Ascending aorta (tissue), 2 donors: ENCODE measurements at regions of chr11 and their contacts with region 1.

Region 1: GRCh38 chr11:58579192-58580129 is 598 bp downstream of the ZFP91 start:
- DNase-seq: peak; percentile 77 to 96
- H3K4me3 ChIP-seq: peak overlapping the region; percentile 94 to 97
- H3K27ac ChIP-seq: peak overlapping the region; percentile 98 to 99
- H3K4me1 ChIP-seq: peaks cover 0 to 32% of the 10 kb centered on the region in 2 donors
- H3K27me3 ChIP-seq: no peaks in the 10 kb centered on the region
- CTCF ChIP-seq: peak; percentile 65 to 94 (median 73)

Region 2: DNA sequence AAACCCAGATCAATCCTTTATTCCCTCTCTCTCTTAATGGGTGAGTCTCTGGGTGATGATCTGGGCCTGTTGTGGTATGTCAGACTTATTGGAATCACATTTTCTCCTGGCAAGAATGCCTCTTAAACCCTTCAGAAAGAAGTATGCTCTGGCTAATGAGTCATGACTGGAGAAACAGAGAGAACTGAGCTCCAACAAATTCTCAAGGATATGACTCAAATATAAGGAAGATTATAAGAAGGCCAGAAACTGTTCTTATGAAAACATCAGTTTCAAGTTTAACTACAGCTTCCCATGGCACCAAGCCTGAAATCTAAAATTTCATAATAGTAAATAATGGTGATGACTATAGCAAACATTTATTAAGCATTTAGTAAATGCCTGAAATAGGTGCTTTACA is 1506.8 kb before region 1 on chr11:
- intact Hi-C with region 1: loop called (anchors 10 kb)
- DNase-seq: no peak
- H3K4me3 ChIP-seq: no peak overlapping the region
- H3K27ac ChIP-seq: peak overlapping the region; percentile 30 to 60
- H3K4me1 ChIP-seq: peaks cover 0 to 4% of the 10 kb centered on the region in 2 donors
- H3K27me3 ChIP-seq: no peaks in the 10 kb centered on the region
- CTCF ChIP-seq: no peak

Region 3: DNA sequence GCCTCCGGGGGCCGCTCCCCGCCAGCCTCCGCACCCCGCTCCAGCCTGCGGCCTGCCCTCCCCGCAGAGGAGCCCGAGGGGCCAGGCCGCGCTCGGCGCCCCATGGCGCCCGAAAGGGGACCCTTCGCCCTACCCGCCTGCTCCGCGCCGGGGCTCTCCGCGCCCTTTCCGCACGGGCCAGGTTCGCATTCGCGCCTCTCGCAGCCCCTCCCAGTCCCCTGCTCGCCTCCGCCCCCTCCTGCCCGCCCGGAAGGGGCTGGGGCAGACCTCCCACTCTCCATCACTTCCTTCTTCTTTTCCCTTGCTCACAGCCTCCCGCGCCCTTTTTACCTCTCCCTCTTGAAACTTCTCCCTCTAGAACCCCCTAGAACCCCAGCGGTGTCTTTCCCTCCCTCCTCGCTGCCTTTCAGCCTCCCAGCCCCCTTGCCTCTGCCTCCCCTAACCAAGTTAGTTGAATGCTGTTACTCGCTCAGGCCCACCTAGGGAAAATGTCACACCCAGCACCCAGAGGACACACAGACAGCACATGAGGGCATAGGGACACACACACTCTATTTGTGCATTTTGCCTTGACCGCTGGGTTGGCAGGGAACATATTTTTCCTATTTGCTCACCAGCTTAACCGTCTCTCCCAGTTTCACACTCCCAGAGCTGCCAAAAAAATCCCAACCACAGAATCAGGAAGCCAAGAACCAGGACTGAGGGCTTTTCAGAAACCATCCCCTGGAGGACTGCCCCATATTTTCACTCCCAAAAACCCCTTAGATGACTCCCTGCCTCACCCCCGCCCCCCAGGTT is 1152.3 kb before region 1 on chr11 and contains the start of gene SLC43A3:
- intact Hi-C with region 1: loop called (anchors 2 kb)
- DNase-seq: peak; percentile 43 to 89
- H3K4me3 ChIP-seq: peak within 1 kb of the TSS; percentile 49 to 80
- H3K27ac ChIP-seq: peak within 1 kb of the TSS; percentile 97 to 98
- H3K4me1 ChIP-seq: peaks cover 23 to 43% of the 10 kb centered on the region in 2 donors
- H3K27me3 ChIP-seq: no peaks in the 10 kb centered on the region
- CTCF ChIP-seq: no peak
- total RNA-seq, gene SLC43A3: 211 TPM

Region 4: DNA sequence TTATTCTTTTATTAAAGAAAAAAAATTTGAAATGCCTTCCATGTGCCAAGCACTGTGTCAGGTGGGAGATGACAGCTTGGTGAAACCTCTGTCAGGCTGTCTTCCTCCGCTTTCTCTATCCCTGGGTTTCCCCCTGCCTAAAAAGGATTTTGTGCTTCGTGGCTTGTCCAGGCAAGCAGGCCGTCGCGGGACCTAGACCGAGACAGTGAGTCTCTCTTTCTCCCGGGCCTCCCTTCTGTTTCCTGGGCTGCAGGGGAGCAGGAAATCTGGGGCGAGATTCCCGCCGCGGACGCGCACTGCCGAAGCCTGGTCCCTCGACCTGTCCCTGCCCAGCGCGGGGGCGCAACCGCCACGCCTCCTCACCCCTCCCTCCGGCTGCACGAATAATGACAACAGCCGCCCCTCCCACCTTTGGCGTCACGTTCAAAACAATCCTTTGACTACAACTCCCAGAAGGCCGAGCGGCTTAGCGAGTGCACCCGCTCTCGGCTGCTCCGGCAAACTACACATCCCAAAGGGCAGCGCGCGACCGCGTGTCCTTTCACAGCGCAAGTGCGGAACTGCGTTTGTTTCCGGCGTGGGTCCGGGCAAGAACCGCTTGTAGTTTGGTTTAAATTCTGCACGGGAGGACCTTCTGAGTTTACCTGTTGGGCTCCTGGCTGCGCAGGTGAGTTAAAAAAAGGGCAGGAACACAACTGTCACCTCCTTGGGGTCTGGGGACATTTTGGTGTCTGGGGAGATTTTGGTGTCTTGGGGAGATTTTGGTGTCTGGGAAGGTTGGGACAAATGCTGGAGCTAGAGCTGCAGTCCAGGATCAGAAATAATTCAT is 922.1 kb before region 1 on chr11 and contains the start of gene CLP1:
- intact Hi-C with region 1: loop called (anchors 2 kb)
- DNase-seq: peak; percentile 98 to 100
- H3K4me3 ChIP-seq: peak within 1 kb of the TSS; percentile 67 to 70
- H3K27ac ChIP-seq: peak within 1 kb of the TSS; percentile 87 to 88
- H3K4me1 ChIP-seq: peaks cover 0 to 6% of the 10 kb centered on the region in 2 donors
- H3K27me3 ChIP-seq: no peaks in the 10 kb centered on the region
- CTCF ChIP-seq: no peak
- total RNA-seq, gene CLP1: 1.2 TPM

Region 5: DNA sequence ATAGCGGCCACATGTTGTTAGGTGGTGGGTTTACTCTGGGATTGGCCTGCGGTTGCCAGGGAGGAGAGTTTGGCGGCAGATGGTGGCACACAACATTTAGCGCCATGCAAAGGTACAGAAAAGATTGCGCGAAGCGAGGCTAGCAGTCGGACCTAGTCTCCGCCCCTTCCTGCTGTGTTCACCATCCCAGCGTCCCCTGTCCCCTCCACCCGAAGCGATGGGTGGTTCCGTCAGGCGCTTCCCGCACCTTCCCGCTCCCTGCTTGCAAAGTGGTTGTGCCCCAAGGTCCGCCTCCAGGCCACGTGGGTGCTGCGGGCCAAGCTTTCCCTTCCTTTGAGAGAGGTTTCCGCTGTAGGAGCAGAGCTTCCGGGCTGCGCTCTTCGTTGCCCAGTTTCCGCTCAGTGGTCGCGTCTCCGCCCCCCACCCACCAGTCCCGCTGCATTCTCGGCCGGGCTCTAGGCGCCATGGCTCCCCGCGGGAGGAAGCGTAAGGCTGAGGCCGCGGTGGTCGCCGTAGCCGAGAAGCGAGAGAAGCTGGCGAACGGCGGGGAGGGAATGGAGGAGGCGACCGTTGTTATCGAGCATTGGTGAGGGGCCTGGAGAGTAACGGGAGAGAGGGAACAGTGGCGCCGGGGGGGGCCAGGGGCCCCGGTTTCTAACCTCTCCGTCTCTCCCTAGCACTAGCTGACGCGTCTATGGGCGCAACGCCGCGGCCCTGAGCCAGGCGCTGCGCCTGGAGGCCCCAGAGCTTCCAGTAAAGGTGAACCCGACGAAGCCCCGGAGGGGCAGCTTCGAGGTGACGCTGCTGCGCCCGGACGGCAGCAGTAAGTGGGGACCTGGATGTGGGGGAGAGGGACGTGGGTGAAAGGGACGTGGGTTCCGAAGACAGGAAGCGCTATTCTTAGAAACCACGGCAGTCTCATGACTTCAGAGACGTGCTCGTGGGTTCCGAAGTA is 838.1 kb before region 1 on chr11 and contains the start of gene SELENOH:
- intact Hi-C with region 1: loop called (anchors 5 kb)
- DNase-seq: peak; percentile 84 to 98
- H3K4me3 ChIP-seq: peak within 1 kb of the TSS; percentile 91 to 93
- H3K27ac ChIP-seq: peak within 1 kb of the TSS; percentile 95 to 97
- H3K4me1 ChIP-seq: peaks cover 0 to 15% of the 10 kb centered on the region in 2 donors
- H3K27me3 ChIP-seq: no peaks in the 10 kb centered on the region
- CTCF ChIP-seq: no peak
- total RNA-seq, gene SELENOH: 113 TPM

Region 6: DNA sequence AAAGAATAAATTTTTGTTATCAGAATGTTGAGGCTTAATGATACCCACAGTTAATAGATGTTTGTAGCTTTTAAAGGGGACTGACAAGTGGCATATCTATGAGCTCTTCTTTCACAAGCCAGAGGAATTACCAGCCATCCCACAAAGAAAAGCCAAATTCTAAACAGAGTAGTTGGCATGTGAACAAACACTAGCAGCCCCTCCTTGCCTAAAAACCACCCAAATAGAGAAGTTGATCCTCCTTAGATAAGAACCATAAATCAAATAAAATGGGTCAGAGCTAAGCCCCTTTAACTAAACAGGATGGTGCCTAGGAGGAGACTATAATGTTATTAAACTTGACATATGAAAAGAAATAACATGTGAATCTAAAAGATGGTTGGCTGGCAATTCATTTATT is 15.2 kb before region 1 on chr11:
- intact Hi-C with region 1: loop called (anchors 2 kb)
- DNase-seq: no peak
- H3K4me3 ChIP-seq: no peak overlapping the region
- H3K27ac ChIP-seq: peak overlapping the region; percentile 87
- H3K4me1 ChIP-seq: peaks cover 0 to 24% of the 10 kb centered on the region in 2 donors
- H3K27me3 ChIP-seq: no peaks in the 10 kb centered on the region
- CTCF ChIP-seq: no peak

Region 7: DNA sequence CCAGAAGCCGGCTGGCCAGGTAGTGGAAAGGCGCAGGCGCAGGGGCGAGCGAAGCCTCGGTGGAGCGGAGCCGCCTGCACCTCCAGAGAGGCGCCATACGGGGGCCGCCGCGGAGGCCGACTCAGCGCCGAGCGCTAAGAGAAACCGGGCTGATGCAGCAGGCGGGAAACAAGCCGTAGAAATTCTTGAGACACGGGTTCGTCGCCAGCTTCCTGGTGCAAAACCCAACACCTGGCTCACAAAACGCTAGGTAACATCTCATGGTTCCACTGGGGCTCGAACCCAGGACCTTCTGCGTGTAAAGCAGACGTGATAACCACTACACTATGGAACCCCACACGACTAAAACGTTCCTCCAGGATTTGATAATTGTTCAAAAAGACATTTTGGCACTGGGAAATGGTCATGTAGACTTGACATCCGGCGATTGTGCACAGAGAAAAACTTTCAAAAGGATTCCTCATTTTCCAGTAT is 970.9 kb after region 1 on chr11:
- intact Hi-C with region 1: loop called (anchors 5 kb)
- DNase-seq: peak in 1 of 2 donors; percentile 90
- H3K4me3 ChIP-seq: peak overlapping the region; percentile 50 to 71
- H3K27ac ChIP-seq: peak overlapping the region; percentile 84 to 89
- H3K4me1 ChIP-seq: peaks cover 0 to 4% of the 10 kb centered on the region in 2 donors
- H3K27me3 ChIP-seq: no peaks in the 10 kb centered on the region
- CTCF ChIP-seq: peak; percentile 53 to 75 (median 66)